Dorsolateral prefrontal cortex (tissue), 120 donors: ENCODE measurements at regions of chr14 and their contacts with region 1.

Region 1: GRCh38 chr14:31420319-31421111 is at the start of gene HEATR5A:
- DNase-seq: peak; percentile 88 to 96 (median 94)
- H3K4me3 ChIP-seq: peak within 1 kb of the TSS; percentile 60 to 100 (median 91)
- H3K27ac ChIP-seq: peak within 1 kb of the TSS; percentile 3 to 92 (median 79)
- H3K27me3 ChIP-seq: no peaks in the 10 kb centered on the region
- CTCF ChIP-seq: peak in 53 of 56 donors; percentile 20 to 69 (median 49)
- total RNA-seq, gene HEATR5A: 21.3 to 55.7 (median 34.4) TPM

Region 2: DNA sequence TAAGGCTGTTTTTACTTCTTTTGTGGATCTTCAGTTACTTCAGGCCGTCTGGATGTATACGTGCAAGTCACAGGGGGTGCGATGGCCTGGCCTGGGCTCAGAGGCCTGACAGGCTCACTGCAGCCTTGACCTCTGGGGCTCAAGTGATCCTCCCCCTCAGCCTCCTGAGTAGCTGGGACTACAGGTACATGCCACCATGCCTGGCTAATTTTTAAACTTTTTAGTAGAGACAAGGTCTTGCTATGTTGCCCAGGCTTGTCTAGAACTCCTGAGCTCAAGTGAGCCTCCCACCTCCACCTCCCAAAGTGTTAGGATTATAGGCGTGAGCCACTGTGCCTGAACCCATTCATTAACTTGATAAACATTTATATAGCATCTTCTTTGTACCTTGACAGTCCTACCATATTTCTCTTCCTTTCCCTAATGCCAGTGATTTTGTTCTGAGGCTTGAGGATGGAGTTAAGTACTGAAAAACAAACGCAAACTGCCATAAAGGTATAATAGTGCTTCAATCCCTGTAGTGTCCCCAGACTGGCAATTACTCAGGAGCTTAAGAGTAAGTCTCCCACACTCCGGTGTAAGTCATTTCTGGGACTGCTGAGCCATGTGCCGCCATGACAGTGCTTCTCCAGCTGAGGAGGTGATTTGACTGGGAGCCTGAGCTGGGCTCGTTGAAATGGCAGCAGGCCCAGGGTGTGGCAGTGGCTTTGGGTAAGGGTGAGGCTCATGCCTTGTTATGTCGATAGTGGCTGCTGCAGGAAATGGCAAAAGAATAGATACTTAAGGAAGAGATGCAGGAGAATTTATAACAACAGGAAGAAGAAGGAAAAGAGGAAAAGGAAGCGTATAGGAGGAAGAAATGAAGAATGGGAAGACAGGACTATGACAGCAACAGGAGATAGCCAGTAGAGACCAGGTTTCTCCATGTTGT is 169.2 kb before region 1 on chr14:
- intact Hi-C with region 1: no loop called
- DNase-seq: no peak
- H3K4me3 ChIP-seq: no peak overlapping the region
- H3K27ac ChIP-seq: no peak overlapping the region
- H3K27me3 ChIP-seq: no peaks in the 10 kb centered on the region
- CTCF ChIP-seq: no peak

Region 3: GRCh38 chr14:31449971-31450610 is 29.6 kb after region 1 on chr14:
- intact Hi-C with region 1: loop called in 1 of 2 experiments (anchors 2 kb)
- DNase-seq: no peak
- H3K4me3 ChIP-seq: no peak overlapping the region
- H3K27ac ChIP-seq: peak overlapping the region in 18 of 59 donors; percentile 0 to 73 (median 33)
- H3K27me3 ChIP-seq: no peaks in the 10 kb centered on the region
- CTCF ChIP-seq: peak; percentile 33 to 76 (median 64)

Region 4: GRCh38 chr14:31456841-31457664 is 36.5 kb after region 1 on chr14 and contains the start of gene DTD2:
- intact Hi-C with region 1: loop called in 1 of 2 experiments (anchors 2 kb)
- DNase-seq: peak; percentile 94 to 97 (median 96)
- H3K4me3 ChIP-seq: peak within 1 kb of the TSS; percentile 56 to 98 (median 82)
- H3K27ac ChIP-seq: peak within 1 kb of the TSS; percentile 70 to 98 (median 93)
- H3K27me3 ChIP-seq: no peaks in the 10 kb centered on the region
- CTCF ChIP-seq: peak in 38 of 56 donors; percentile 4 to 59 (median 28)
- total RNA-seq, gene DTD2: 11.4 to 33.1 (median 22.2) TPM